Tibial artery (tissue), 4 donors: ENCODE measurements at regions of chr12 and their contacts with region 1.

Region 1: DNA sequence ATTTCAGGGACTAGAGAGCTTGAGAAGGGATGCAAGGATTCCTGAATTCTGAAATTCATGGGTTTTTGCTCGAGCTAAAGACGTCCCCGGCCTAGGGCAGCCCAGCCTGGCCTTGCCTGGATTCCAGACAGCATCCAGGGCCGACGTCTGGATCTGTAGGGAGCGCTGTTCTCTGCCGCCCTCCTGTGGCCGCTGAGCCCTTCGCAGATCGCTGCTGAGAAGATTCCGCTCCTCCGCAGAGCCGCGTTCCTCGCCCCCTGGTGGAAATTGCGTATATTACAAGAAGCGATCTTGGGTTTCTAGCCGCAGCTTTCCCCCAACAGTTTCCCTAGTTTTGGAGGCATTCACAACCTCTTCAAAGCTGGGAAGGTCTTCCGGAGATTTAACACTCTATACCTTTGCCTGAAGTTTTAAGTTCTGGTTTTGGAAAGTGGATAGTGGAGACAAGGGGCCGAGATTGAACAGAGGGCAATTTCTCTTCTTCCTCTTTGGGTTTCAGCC is 5.1 kb downstream of the CISTR start:
- DNase-seq: peak; percentile 90 to 96
- H3K4me3 ChIP-seq: no peak overlapping the region
- H3K27ac ChIP-seq: no peak overlapping the region
- H3K4me1 ChIP-seq: peaks cover 0 to 21% (median 12%) of the 10 kb centered on the region in 4 donors
- H3K27me3 ChIP-seq: peaks cover 0 to 59% of the 10 kb centered on the region in 2 donors
- CTCF ChIP-seq: peak; percentile 100

Region 2: GRCh38 chr12:53701518-53702260 is 45.0 kb before region 1 on chr12:
- intact Hi-C with region 1: loop called (anchors 2 kb)
- DNase-seq: peak; percentile 84 to 90
- H3K4me3 ChIP-seq: no peak overlapping the region
- H3K27ac ChIP-seq: no peak overlapping the region
- H3K4me1 ChIP-seq: peaks cover 0 to 2% (median 0%) of the 10 kb centered on the region in 4 donors
- H3K27me3 ChIP-seq: peaks cover 0 to 66% of the 10 kb centered on the region in 2 donors
- CTCF ChIP-seq: peak; percentile 85 to 93